ENCODE measurements at regions of chr9 and their contacts with region 1.

Region 1: GRCh38 chr9:106878924-106879323 is 16.0 kb downstream of the ZNF462 start:
- DNase-seq: no peak
- ATAC-seq: no peak
- H3K4me3 ChIP-seq: no peak overlapping the region
- H3K27ac ChIP-seq: no peak overlapping the region
- H3K4me1 ChIP-seq: no peaks in the 10 kb centered on the region
- H3K27me3 ChIP-seq: no peaks in the 10 kb centered on the region
- CTCF ChIP-seq: no peak
- EP300 ChIP-seq: no peak
- POLR2A ChIP-seq: no peak
- RAD21 ChIP-seq: no peak

Region 2: GRCh38 chr9:106771631-106772030 is 107.3 kb before region 1 on chr9:
- CTCF ChIA-PET with region 1: no interaction called
- POLR2A ChIA-PET with region 1: no interaction called
- in situ Hi-C with region 1: no loop called
- intact Hi-C with region 1: no loop called
- DNase-seq: no peak
- ATAC-seq: no peak
- H3K4me3 ChIP-seq: no peak overlapping the region
- H3K27ac ChIP-seq: no peak overlapping the region
- H3K4me1 ChIP-seq: no peaks in the 10 kb centered on the region
- H3K27me3 ChIP-seq: peaks cover 0 to 1% of the 10 kb centered on the region in 2 experiments; a peak in 1 of 5 replicates
- CTCF ChIP-seq: no peak
- EP300 ChIP-seq: no peak
- POLR2A ChIP-seq: no peak
- RAD21 ChIP-seq: no peak

Region 3: DNA sequence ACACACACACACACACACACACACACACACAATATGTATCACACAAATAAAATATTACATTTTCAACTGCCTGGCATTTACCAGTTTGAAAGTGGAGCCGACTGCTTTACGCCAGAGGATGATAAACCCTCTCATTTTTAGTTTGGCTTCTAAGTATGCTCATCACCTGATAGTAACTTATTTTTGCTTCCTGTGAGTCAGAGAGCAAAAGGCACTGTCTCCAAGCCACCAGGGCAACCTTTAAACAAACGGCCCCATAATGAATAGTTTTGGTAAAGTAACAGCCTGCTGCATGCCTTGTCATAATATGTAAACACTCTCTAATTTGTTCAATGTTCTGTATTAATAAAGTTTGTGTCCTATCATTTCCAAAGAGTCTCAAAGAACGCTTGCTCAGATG is 583.8 kb after region 1 on chr9:
- CTCF ChIA-PET with region 1: no interaction called
- POLR2A ChIA-PET with region 1: no interaction called
- in situ Hi-C with region 1: no loop called
- intact Hi-C with region 1: loop called (anchors 5 kb)
- DNase-seq: peak; percentile 23
- ATAC-seq: peak; percentile 38; the same call in 1 of the 3 replicates
- H3K4me3 ChIP-seq: no peak overlapping the region
- H3K27ac ChIP-seq: no peak overlapping the region
- H3K4me1 ChIP-seq: peaks cover 7% of the 10 kb centered on the region; the same call in 1 of the 2 replicates
- H3K27me3 ChIP-seq: no peaks in the 10 kb centered on the region; a peak in 1 of 5 replicates
- CTCF ChIP-seq: no peak
- EP300 ChIP-seq: no peak
- POLR2A ChIP-seq: no peak
- RAD21 ChIP-seq: no peak